Heart right ventricle (tissue), 16 donors: ENCODE measurements at regions of chr3 and their contacts with region 1.

Region 1: DNA sequence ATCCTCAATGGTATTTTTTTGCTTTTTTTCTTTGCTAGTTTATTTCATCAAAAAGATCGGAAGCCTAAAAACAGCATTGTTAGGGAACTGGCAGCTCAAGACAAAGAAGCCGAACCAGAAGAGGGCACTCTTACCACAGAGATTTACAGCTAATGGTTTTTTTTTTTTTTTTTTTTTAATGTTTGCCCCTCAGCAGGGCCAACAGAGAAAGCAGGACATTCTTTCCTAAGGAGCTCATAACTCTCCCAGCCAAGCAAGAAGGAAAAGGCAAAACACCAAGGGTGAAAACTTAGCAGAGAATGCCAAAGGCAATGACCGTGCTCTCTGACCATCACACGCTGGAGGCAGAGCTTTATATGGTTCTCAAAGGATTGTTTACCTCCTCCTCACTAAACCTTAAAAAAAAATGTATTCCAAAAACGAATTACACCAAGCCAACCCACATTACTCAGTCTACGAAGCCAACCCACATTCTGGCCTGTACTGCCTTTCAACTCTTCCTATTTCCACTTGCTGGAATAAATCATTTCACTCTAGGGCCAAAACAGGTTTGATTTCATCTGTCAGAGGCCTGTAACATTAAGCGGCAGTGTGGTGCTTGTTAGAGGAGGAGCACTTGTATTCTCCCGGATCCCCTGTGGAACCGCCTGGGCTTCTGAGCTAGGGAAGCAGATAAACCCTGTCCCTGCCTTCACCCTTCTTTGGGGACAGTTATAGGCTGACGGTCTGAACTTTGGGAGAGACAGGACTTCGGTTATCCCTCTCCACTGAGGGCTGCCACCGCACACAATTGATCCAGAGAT is 35.6 kb upstream of the GYG1 start:
- DNase-seq: peak in 1 of 2 donors; percentile 72
- ATAC-seq: peak; percentile 84 to 92 (median 89)
- H3K4me3 ChIP-seq: no peak overlapping the region
- H3K27ac ChIP-seq: peak overlapping the region; percentile 31 to 84 (median 69)
- H3K4me1 ChIP-seq: peaks cover 0 to 11% (median 7%) of the 10 kb centered on the region in 9 donors
- H3K27me3 ChIP-seq: no peaks in the 10 kb centered on the region
- CTCF ChIP-seq: peak; percentile 34 to 73 (median 63)

Region 2: GRCh38 chr3:148459931-148460513 is 495.7 kb before region 1 on chr3:
- intact Hi-C with region 1: no loop called
- DNase-seq: no peak
- ATAC-seq: no peak
- H3K4me3 ChIP-seq: no peak overlapping the region
- H3K27ac ChIP-seq: no peak overlapping the region
- H3K4me1 ChIP-seq: no peaks in the 10 kb centered on the region
- H3K27me3 ChIP-seq: no peaks in the 10 kb centered on the region
- CTCF ChIP-seq: peak in 4 of 9 donors; percentile 17 to 34 (median 26)

Region 3: DNA sequence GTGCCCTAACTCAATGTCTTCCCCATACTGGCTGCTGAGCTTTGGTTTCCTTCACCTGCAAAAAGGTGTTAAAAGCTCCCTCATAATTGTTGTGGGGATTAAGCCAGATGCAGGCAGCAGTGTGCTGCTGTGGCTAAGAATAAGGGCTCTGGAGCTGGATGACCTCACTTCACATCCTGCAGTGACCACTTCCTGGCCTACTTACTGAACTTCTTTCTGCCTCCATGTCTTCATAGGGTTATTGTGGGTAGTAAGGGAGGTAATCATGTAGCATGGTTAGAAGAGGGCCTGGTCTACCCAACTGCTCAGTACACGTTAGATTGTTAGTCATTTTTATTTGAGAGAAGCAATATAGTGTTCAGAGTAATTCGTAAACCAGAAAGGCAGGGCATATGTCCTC is 54.0 kb after region 1 on chr3:
- intact Hi-C with region 1: loop called in 1 of 10 experiments (anchors 10 kb)
- DNase-seq: no peak
- ATAC-seq: peak in 3 of 8 donors; percentile 28 to 33 (median 31)
- H3K4me3 ChIP-seq: no peak overlapping the region
- H3K27ac ChIP-seq: peak overlapping the region in 3 of 10 donors; percentile 25 to 68 (median 59)
- H3K4me1 ChIP-seq: peaks cover 0 to 40% (median 31%) of the 10 kb centered on the region in 9 donors
- H3K27me3 ChIP-seq: no peaks in the 10 kb centered on the region
- CTCF ChIP-seq: no peak

Region 4: DNA sequence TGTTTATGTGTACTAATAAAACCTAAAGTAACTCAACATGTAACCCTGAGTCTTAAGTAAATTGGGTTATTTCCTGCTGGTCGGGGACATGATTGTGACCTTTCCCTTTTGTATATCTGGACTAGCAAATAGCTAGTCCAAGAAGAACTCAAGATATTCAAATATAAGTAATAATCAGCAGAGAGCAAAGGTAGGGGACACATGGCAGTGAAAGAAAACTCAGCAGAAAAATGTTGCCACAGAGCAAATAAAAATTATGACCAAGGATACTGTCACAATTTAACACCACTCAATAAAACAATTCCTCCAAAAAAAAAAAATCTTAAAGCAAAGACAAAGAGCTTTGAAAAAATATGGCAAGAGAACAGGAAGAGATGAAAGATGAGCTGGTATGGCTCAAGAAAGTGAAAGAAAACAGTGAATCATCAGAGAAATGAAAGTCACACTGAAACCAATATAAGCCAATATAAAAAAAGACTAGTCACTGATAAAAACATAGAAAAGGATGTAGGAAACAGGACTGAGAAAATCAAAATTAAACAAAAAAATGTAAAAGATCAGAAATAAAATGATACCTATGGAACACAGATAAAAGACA is 87.1 kb after region 1 on chr3:
- intact Hi-C with region 1: loop called in 1 of 10 experiments (anchors 10 kb)
- DNase-seq: no peak
- ATAC-seq: no peak
- H3K4me3 ChIP-seq: no peak overlapping the region
- H3K27ac ChIP-seq: peak overlapping the region in 1 of 10 donors; percentile 48
- H3K4me1 ChIP-seq: peaks cover 0 to 13% (median 0%) of the 10 kb centered on the region in 9 donors
- H3K27me3 ChIP-seq: no peaks in the 10 kb centered on the region
- CTCF ChIP-seq: no peak

Region 5: GRCh38 chr3:149114458-149114857 is 158.7 kb after region 1 on chr3:
- intact Hi-C with region 1: loop called in 5 of 10 experiments (anchors 5 to 10 kb)
- DNase-seq: no peak
- ATAC-seq: peak in 2 of 8 donors; percentile 12 to 55
- H3K4me3 ChIP-seq: no peak overlapping the region
- H3K27ac ChIP-seq: no peak overlapping the region
- H3K4me1 ChIP-seq: peaks cover 0 to 8% (median 4%) of the 10 kb centered on the region in 9 donors
- H3K27me3 ChIP-seq: no peaks in the 10 kb centered on the region
- CTCF ChIP-seq: no peak

Region 6: DNA sequence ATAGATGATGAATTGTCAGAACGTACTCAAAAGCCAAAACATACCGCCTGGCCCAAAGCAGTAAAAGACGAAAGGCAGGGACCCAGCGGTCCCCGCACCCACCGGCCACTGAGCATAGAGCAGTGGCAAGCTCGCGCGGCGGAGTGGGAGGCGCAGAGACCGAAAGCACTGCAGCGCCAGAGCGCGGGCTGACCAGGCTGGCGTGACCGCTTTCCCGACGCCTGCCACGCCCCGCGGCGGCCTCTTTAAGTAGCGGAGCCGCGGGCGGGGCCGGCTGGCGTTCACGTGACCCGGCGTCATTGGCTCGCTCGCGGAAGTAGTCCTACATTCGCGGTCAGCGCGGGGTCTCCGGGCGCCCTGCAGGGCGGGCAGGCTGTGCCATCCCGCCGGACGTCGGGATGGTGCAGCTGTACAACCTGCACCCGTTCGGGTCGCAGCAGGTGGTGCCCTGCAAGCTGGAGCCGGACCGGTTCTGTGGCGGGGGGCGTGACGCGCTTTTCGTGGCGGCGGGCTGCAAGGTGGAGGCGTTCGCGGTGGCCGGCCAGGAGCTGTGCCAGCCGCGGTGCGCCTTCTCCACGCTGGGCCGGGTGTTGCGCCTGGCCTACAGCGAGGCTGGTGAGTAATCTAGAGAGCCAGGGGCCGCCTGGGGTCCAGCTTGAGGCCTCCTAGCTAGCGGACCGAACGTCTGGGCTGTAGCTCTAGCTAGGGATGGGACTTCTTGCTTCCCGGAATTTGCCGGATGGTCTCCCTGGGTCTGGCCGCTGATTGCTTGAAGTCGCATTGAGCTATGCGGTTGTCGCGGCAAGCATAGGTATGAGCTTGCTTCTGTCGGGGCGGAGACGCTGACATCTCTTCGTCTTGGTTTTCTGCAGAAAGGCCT is 173.8 kb after region 1 on chr3 and contains the start of gene HPS3:
- intact Hi-C with region 1: loop called in 5 of 10 experiments (anchors 5 to 10 kb)
- DNase-seq: peak; percentile 89 to 92
- ATAC-seq: peak; percentile 98 to 99 (median 99)
- H3K4me3 ChIP-seq: peak within 1 kb of the TSS; percentile 42 to 99 (median 88)
- H3K27ac ChIP-seq: peak within 1 kb of the TSS; percentile 19 to 90 (median 84)
- H3K4me1 ChIP-seq: peaks cover 0 to 38% (median 30%) of the 10 kb centered on the region in 9 donors
- H3K27me3 ChIP-seq: no peaks in the 10 kb centered on the region
- CTCF ChIP-seq: peak in 4 of 9 donors; percentile 4 to 24 (median 21)
- total RNA-seq, gene HPS3: 3.9 to 12.8 (median 5.0) TPM

Region 7: DNA sequence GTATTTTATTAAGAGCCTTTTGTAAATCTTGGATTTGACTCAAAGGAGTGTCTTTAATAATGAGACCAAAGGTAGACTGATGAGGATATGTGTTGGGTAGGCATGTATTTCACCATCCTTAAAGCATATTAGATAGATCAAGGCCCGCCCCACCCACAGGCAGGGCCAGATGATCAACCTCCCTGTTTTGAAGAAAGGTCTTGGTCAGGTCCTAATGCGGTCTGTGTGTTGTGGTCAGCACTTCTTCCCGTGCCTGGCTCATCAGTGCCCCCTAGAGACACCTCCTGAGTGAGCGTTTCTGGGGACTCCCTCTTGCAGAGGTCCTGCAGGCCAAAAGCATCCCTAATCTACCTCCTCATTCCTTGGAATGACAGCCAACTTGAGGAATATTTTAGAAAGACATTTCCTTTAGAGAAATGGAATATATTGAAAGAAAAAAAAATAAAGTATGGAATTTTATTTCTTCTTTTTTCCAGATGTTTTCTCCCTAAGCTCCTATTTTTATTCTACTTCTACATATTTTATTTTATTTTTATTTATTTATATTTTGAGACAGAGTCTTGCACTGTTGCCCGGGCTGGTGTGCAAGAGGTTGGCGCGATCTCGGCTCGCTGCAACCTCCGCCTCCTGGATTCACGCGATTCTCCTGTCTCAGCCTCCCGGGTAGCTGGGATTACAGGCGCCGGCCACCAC is 524.7 kb after region 1 on chr3:
- intact Hi-C with region 1: loop called in 1 of 10 experiments (anchors 10 kb)
- DNase-seq: peak; percentile 74 to 88
- ATAC-seq: peak; percentile 92 to 97 (median 96)
- H3K4me3 ChIP-seq: no peak overlapping the region
- H3K27ac ChIP-seq: peak overlapping the region; percentile 12 to 89 (median 74)
- H3K4me1 ChIP-seq: peaks cover 0 to 20% (median 14%) of the 10 kb centered on the region in 9 donors
- H3K27me3 ChIP-seq: no peaks in the 10 kb centered on the region
- CTCF ChIP-seq: peak; percentile 71 to 97 (median 86)